ENCODE measurements at regions of chr21 and their contacts with region 1.

Region 1: DNA sequence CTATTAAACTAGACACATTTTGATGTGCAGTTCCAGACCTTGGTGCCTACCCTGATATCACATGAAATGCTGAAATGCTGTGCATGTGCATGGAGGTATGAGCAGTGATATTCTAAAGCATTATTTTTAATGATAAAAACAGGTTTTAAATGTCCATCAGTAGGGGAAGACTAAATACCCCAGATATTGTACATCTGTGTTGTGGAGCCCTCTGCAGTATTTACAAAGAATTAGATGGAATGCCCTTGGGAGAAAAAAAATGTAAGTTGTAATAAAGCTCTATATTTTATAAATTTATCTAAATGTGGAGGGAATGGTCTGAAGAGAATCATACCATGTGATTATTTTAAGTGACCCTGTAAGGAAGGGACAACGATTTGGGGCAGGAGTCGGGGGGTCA is 39.1 kb upstream of the IGSF5 start:
- DNase-seq: no peak
- H3K4me3 ChIP-seq: no peak overlapping the region
- CTCF ChIP-seq: no peak

Region 2: GRCh38 chr21:39288987-39289386 is 416.9 kb before region 1 on chr21:
- CTCF ChIA-PET with region 1: no interaction called
- POLR2A ChIA-PET with region 1: no interaction called
- DNase-seq: no peak
- H3K4me3 ChIP-seq: no peak overlapping the region
- CTCF ChIP-seq: no peak

Region 3: DNA sequence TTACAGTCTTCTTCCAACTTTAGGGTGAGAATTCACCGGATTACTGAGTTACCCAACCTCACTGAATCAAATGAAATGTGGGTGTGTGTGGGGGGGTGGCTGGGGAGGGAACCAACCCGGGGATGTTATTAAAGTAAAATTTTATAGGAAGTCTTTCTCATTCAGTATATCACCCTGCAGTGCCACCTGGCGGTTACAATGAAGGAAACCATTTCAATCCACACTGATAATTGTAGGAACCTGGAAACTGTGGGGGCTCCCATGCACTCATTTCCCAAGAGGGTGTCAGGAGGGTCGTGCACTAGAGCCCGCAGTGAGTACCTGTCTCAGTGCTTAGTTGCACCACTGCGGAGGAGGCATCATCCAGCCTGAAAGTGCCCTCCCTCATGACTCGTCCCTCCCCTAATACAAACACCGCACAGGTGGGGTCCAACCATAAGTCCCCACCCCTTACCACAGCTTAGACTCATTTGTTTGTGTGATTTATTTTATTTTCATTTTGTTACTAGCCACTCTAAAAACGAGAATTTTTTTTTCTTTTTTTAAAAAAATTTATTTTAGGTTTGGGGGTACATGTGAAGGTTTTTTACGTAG is 10.1 kb after region 1 on chr21:
- CTCF ChIA-PET with region 1: interaction called, 37 read pairs
- POLR2A ChIA-PET with region 1: no interaction called
- DNase-seq: no peak
- H3K4me3 ChIP-seq: no peak overlapping the region
- CTCF ChIP-seq: peak; percentile 53

Measured in AG04449 (cell line).